Activated CD4-positive, alpha-beta T cell treated with anti-CD3 and anti-CD28 coated beads, Interleukin-2, amount 10 ng/mL, durations not matched to agents 24 days and 14 days (primary cell): ENCODE measurements at regions of chr4 and their contacts with region 1.

Region 1: GRCh38 chr4:159129814-159130550 is 27.1 kb downstream of the RAPGEF2 start:
- DNase-seq: no peak
- H3K4me3 Mint-ChIP-seq: no peak overlapping the region
- H3K27ac Mint-ChIP-seq: no peak overlapping the region
- H3K4me1 Mint-ChIP-seq: peaks cover 21% of the 10 kb centered on the region
- H3K27me3 Mint-ChIP-seq: no peaks in the 10 kb centered on the region

Region 2: GRCh38 chr4:159169404-159170302 is 39.7 kb after region 1 on chr4:
- intact Hi-C with region 1: loop called (anchors 5 kb)
- DNase-seq: no peak
- H3K4me3 Mint-ChIP-seq: no peak overlapping the region
- H3K27ac Mint-ChIP-seq: no peak overlapping the region
- H3K4me1 Mint-ChIP-seq: peaks cover 27% of the 10 kb centered on the region
- H3K27me3 Mint-ChIP-seq: no peaks in the 10 kb centered on the region